WTC11 (cell line): ENCODE measurements at regions of chr1 and their contacts with region 1.

Region 1: DNA sequence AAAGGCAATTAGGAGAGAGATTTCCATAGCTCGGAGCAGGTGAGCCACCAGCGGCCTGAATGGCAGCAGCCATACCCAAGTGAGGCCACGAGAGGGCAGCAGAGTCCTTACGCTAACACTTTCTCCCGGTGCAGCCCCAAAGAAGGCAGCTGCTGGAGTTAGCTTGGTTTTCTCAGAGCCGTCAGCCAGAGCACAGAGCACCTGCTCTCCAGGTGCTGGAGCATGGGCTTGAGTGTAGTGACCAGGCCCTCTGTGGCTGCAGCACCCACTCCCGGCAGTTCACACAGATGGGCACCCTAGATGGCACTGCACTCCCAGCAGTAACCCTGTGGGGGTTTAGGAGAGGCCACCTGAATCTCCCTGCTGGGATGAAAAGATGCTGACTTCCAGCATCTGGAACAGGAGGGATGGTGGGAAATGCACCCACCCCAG is 45.8 kb downstream of the TMCC2 start:
- DNase-seq: peak; percentile 95
- ATAC-seq: peak; percentile 78
- H3K4me3 Mint-ChIP-seq: no peak overlapping the region
- H3K27ac Mint-ChIP-seq: peak overlapping the region; percentile 83
- H3K4me1 Mint-ChIP-seq: peaks cover 17% of the 10 kb centered on the region
- H3K27me3 Mint-ChIP-seq: no peaks in the 10 kb centered on the region
- CTCF ChIP-seq: peak; percentile 97

Region 2: DNA sequence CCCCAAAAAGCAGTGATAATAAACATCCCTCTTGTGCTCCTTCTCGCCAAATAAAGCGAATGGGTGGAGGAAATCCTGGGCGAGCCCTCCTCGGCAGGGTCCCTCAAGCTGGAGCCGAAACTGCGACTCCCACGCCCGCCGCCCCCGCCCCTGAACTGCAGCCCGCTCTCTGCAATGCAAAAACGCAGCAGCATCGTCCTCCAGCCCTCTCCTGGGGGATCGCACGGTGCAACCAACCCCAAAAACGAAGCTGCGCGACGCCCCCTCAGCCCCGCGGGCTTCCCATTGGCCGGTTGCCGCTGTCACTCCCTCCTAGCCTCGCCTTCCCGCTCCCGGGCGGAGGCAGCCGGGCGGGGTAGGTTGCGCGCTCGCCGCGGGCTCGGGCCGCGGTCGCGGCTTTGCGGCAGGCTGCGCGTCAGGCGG is 46.0 kb before region 1 on chr1 and contains the start of gene TMCC2:
- CTCF ChIA-PET with region 1: interaction called, 30 read pairs
- POLR2A ChIA-PET with region 1: interaction called, 5 read pairs
- DNase-seq: peak; percentile 97
- ATAC-seq: peak; percentile 96
- H3K4me3 Mint-ChIP-seq: peak within 1 kb of the TSS; percentile 82
- H3K27ac Mint-ChIP-seq: peak within 1 kb of the TSS; percentile 95
- H3K4me1 Mint-ChIP-seq: peaks cover 34% of the 10 kb centered on the region
- H3K27me3 Mint-ChIP-seq: peaks cover 15% of the 10 kb centered on the region
- CTCF ChIP-seq: no peak
- total RNA-seq, gene TMCC2: 9.5 to 11.2 TPM (median 11.2 TPM) in 3 replicates

Region 3: DNA sequence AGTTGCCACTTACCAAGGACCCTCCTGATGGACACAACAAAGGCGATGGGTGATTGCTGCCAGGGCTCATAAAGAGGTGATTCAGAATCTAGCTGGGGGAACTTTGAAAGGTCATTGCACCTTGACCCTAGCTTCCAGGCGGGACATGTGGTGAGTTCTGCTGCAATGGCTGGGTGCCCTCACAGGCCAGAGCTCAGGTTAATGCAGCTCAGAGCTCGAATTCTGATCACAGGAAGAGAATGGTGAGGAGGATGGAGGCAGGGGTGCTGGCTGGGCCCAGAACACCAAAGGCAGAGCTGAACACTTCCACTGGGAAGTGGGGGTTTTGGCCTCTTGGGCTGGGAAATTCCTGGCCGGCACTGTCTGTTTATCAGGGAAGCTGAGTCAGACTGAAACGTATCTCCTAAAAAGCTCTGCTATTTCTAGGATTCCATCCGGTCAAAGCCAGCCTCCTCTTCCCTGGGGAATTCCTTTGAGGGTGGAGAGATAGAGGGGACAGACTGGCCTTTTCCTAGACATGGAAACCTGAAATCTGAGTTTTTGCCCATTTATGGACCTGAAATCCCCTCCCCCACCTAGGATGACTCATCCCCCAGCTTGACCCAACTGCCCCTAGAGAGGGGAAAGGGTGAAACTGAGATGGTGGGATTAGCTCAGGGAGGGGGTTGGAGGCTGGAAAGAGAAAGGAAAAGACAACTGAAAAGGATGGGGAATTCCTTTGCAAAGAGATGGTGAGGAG is 20.8 kb after region 1 on chr1:
- CTCF ChIA-PET with region 1: interaction called, 114 read pairs
- POLR2A ChIA-PET with region 1: interaction called, 46 read pairs
- DNase-seq: peak; percentile 58
- ATAC-seq: peak; percentile 58
- H3K4me3 Mint-ChIP-seq: peak overlapping the region; percentile 20; the same call in 1 of the 2 replicates
- H3K27ac Mint-ChIP-seq: peak overlapping the region; percentile 100
- H3K4me1 Mint-ChIP-seq: peaks cover 57% of the 10 kb centered on the region
- H3K27me3 Mint-ChIP-seq: no peaks in the 10 kb centered on the region; the same call in 1 of the 2 replicates
- CTCF ChIP-seq: no peak

Region 4: GRCh38 chr1:205321164-205321958 is 47.8 kb after region 1 on chr1 and contains the start of gene NUAK2:
- CTCF ChIA-PET with region 1: interaction called, 684 read pairs
- POLR2A ChIA-PET with region 1: interaction called, 22 read pairs
- DNase-seq: peak; percentile 98
- ATAC-seq: peak; percentile 88
- H3K4me3 Mint-ChIP-seq: peak within 1 kb of the TSS; percentile 96
- H3K27ac Mint-ChIP-seq: peak within 1 kb of the TSS; percentile 68
- H3K4me1 Mint-ChIP-seq: peaks cover 60% of the 10 kb centered on the region
- H3K27me3 Mint-ChIP-seq: peaks cover 38% of the 10 kb centered on the region
- CTCF ChIP-seq: no peak
- total RNA-seq, gene NUAK2: 8.7 to 10.8 TPM (median 10.8 TPM) in 3 replicates

Region 5: GRCh38 chr1:205359771-205360565 is 86.4 kb after region 1 on chr1:
- CTCF ChIA-PET with region 1: interaction called, 53 read pairs
- POLR2A ChIA-PET with region 1: no interaction called
- DNase-seq: no peak
- ATAC-seq: peak; percentile 13; the same call in 1 of the 2 replicates
- H3K4me3 Mint-ChIP-seq: no peak overlapping the region
- H3K27ac Mint-ChIP-seq: no peak overlapping the region
- H3K4me1 Mint-ChIP-seq: peaks cover 44% of the 10 kb centered on the region
- H3K27me3 Mint-ChIP-seq: no peaks in the 10 kb centered on the region
- CTCF ChIP-seq: no peak